Transverse colon (tissue), 4 donors: ENCODE measurements at regions of chr1 and their contacts with region 1.

Region 1: GRCh38 chr1:9038881-9039760 is 12.9 kb upstream of the SLC2A7 start:
- DNase-seq: no peak
- H3K4me3 ChIP-seq: no peak overlapping the region
- H3K27ac ChIP-seq: no peak overlapping the region
- H3K4me1 ChIP-seq: no peaks in the 10 kb centered on the region
- H3K27me3 ChIP-seq: no peaks in the 10 kb centered on the region
- CTCF ChIP-seq: no peak
- EP300 ChIP-seq: no peak
- POLR2A ChIP-seq: no peak

Region 2: GRCh38 chr1:9088807-9089206 is 49.7 kb after region 1 on chr1:
- in situ Hi-C with region 1: no loop called
- intact Hi-C with region 1: loop called (anchors 1 kb)
- DNase-seq: no peak
- H3K4me3 ChIP-seq: no peak overlapping the region
- H3K27ac ChIP-seq: no peak overlapping the region
- H3K4me1 ChIP-seq: peaks cover 0 to 14% (median 11%) of the 10 kb centered on the region in 4 donors
- H3K27me3 ChIP-seq: peaks cover 6% of the 10 kb centered on the region
- CTCF ChIP-seq: no peak
- EP300 ChIP-seq: no peak
- POLR2A ChIP-seq: no peak

Region 3: DNA sequence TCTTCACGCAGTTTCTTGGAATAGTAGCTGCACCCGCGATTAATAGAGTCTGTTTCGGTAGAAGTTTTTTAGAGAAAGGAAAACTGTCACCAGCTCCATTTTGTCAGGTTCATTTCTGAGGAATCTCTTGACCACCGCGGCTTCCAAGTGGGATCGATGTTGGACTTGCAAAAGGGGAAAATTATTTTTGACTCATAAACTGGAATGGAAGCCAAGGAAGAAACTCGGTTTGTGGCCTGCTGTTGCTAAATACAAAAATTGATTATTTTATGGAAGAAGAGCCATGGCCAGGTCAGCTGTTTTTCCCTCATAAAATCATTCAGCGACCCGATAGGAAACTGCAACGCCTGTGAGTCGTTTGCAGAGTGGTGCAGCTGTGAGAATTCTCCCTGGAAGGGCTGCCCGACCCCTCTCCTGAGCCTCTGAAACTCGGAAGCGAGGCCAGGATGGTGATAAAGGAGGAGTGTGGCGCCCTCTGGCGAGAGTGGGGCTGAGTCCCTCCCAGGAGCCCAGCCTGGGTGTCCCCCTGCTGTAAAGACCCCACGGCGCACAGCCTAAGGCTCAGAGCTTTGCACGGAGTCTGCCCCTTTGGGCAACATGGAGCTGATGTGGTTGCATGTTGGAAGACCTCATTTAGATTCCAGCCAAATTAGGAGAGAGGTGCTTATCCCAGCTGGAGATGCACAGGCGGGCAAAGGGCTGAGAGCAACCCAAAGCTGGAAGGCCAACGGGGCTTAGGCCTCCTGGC is 416.5 kb after region 1 on chr1:
- in situ Hi-C with region 1: no loop called
- intact Hi-C with region 1: no loop called
- DNase-seq: peak; percentile 72
- H3K4me3 ChIP-seq: no peak overlapping the region
- H3K27ac ChIP-seq: no peak overlapping the region
- H3K4me1 ChIP-seq: peaks cover 0 to 3% (median 2%) of the 10 kb centered on the region in 4 donors
- H3K27me3 ChIP-seq: no peaks in the 10 kb centered on the region
- CTCF ChIP-seq: peak; percentile 75 to 90 (median 84)
- EP300 ChIP-seq: no peak
- POLR2A ChIP-seq: no peak